Right ventricle myocardium inferior (tissue), 1 donor: ENCODE measurements at regions of chr4 and their contacts with region 1.

Region 1: GRCh38 chr4:127604949-127605709 is 27.6 kb upstream of the INTU start:
- DNase-seq: no peak
- ATAC-seq: no peak

Region 2: DNA sequence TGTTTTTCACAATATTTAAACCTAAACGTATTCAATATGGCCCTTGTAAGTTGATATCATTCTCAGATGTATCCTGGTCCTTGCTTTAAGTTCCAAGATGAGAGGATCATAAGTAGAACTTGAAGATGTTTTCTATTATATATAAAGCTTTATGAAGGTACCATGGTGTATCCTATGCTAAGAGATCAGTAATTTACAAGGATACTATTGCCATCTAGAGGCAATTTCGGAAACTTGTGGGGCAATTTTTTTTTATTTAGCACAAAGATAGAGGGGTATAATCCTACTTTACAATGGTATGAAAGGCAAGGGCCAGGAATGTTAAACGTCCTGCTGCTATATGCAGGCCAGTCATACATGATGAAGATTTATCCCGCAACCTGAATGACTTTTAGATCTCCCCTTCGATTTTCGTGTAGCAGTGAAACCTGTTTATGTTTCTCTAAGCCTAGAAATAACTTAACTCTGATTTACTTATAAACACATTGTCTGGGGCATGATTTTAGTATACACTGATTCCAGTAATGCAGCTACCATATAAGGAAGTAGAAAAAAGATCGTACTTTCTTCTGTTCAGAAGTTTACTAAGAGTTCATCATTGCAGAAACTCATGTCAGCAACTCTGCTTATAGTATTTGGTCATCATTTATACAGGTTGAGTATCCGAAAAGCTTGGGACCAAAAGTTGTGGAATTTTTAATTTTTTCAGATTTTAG is 127.6 kb after region 1 on chr4:
- intact Hi-C with region 1: loop called (anchors 2 kb)
- DNase-seq: no peak
- ATAC-seq: no peak

Region 3: DNA sequence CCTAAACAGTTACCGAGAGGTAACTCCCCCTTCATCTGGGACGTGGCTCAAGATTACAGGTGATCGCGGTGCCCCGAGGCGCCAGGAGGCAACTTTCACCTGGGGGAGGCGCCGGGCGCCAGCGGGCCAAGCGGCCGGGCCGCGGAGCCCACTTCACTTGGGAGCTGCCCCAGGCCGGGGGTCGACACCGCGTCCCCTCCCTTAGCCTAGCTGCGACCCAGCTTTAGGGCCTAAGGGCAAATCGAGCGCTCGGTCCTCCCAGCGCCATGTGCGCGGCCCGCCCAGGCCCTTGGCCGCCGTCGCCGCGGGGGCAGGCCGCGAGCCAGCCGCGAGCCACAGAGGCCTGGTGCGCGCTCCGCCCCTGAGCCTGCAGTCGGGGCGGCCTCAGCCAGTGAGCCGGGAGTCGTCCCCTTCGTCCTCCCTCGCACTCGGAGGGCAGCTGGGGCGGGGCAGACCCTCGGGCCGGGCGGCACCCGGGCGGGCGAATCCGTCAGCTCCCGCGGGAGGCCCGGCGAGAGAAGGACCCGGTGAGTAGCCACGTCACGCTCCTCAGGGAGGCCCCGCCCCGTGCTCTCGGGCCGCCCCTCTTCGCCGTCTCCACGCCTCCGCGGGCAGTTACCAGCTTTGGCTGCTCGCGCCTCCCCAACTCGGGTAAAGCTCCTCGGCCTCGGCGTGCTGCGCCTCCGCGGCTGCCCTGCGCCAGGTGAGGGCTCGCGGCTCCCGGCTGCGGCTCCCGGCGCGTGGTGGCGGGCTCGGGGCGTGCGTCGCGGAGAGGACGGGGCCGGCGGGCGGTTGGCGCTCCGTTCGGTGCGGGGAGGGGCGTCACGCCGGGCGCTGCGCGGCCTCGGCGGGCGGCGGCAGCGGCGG is 455.8 kb after region 1 on chr4 and contains the start of gene LARP1B:
- intact Hi-C with region 1: no loop called
- DNase-seq: peak; percentile 97
- ATAC-seq: peak; percentile 97
- total RNA-seq, gene LARP1B: 15.4 TPM